ENCODE measurements at regions of chr1 and their contacts with region 1.

Region 1: GRCh38 chr1:202009326-202010179 is 834 bp upstream of the ELF3 start:
- DNase-seq: peak; percentile 91
- H3K4me3 Mint-ChIP-seq: peak overlapping the region; percentile 92
- H3K27ac Mint-ChIP-seq: peak overlapping the region; percentile 89
- H3K4me1 Mint-ChIP-seq: peaks cover 48% of the 10 kb centered on the region
- H3K27me3 Mint-ChIP-seq: no peaks in the 10 kb centered on the region
- CTCF ChIP-seq: peak; percentile 85

Region 2: GRCh38 chr1:201904579-201904978 is 105.0 kb before region 1 on chr1:
- CTCF ChIA-PET with region 1: no interaction called
- intact Hi-C with region 1: no loop called
- DNase-seq: no peak
- H3K4me3 Mint-ChIP-seq: no peak overlapping the region
- H3K27ac Mint-ChIP-seq: no peak overlapping the region
- H3K4me1 Mint-ChIP-seq: no peaks in the 10 kb centered on the region
- H3K27me3 Mint-ChIP-seq: peaks cover 30% of the 10 kb centered on the region
- CTCF ChIP-seq: no peak

Region 3: GRCh38 chr1:202034683-202035462 is 25.3 kb after region 1 on chr1:
- CTCF ChIA-PET with region 1: interaction called, 14 read pairs
- intact Hi-C with region 1: no loop called
- DNase-seq: peak; percentile 99
- H3K4me3 Mint-ChIP-seq: peak overlapping the region; percentile 46
- H3K27ac Mint-ChIP-seq: peak overlapping the region; percentile 97
- H3K4me1 Mint-ChIP-seq: peaks cover 75% of the 10 kb centered on the region
- H3K27me3 Mint-ChIP-seq: no peaks in the 10 kb centered on the region
- CTCF ChIP-seq: no peak

Region 4: GRCh38 chr1:202056644-202057461 is 47.3 kb after region 1 on chr1:
- CTCF ChIA-PET with region 1: interaction called, 13 read pairs
- intact Hi-C with region 1: loop called (anchors 2 kb)
- DNase-seq: peak; percentile 96
- H3K4me3 Mint-ChIP-seq: peak overlapping the region; percentile 4
- H3K27ac Mint-ChIP-seq: peak overlapping the region; percentile 66
- H3K4me1 Mint-ChIP-seq: peaks cover 55% of the 10 kb centered on the region
- H3K27me3 Mint-ChIP-seq: no peaks in the 10 kb centered on the region
- CTCF ChIP-seq: no peak

Region 5: DNA sequence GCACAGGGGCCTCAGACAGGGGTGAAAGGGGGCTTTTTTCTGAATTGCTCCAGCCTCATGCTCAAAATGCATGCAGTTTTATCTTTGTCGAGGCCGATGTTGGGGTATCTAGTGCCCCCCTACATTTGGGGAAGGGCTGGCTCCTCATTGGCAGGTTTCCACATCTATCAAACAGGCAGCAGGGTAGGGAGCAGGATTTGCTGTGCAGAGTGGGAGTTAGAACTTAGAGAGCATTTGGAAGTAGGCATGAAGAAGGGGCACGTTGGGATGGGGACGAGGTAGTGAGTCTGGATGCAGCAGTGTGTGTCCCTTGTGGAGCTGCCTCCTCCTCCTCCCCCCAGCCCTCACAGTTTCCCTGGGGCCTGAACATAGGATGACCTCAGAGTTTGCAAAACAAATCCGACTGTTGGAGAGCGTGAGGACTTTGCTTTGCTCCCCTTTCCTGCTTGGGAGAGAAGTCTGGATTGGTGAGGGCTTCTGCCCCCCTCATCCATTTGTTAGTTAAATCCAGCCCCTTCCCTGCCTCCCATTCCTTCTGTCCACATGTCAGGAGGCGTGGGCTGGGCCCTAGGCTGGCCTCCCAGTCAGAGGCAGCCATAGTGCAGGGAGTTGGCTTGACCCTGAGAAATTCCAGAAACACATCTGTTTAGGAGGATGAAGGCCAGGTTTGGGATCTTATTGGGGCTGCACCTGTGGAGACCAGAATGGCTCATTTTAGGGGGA is 76.3 kb after region 1 on chr1:
- CTCF ChIA-PET with region 1: interaction called, 9 read pairs
- intact Hi-C with region 1: loop called (anchors 2 kb)
- DNase-seq: peak; percentile 73
- H3K4me3 Mint-ChIP-seq: peak overlapping the region; percentile 67
- H3K27ac Mint-ChIP-seq: peak overlapping the region; percentile 99
- H3K4me1 Mint-ChIP-seq: peaks cover 61% of the 10 kb centered on the region
- H3K27me3 Mint-ChIP-seq: no peaks in the 10 kb centered on the region
- CTCF ChIP-seq: no peak

Region 6: GRCh38 chr1:202160377-202160940 is 150.9 kb after region 1 on chr1 and contains the start of gene PTPN7:
- CTCF ChIA-PET with region 1: no interaction called
- intact Hi-C with region 1: no loop called
- DNase-seq: peak; percentile 30
- H3K4me3 Mint-ChIP-seq: no peak within 1 kb of the TSS
- H3K27ac Mint-ChIP-seq: no peak within 1 kb of the TSS
- H3K4me1 Mint-ChIP-seq: peaks cover 4% of the 10 kb centered on the region
- H3K27me3 Mint-ChIP-seq: peaks cover 35% of the 10 kb centered on the region
- CTCF ChIP-seq: no peak
- total RNA-seq, gene PTPN7: not detected in 2 replicates

Measured in Calu3 (cell line).